Vagina (tissue), 2 donors: ENCODE measurements at regions of chr9 and their contacts with region 1.

Region 1: DNA sequence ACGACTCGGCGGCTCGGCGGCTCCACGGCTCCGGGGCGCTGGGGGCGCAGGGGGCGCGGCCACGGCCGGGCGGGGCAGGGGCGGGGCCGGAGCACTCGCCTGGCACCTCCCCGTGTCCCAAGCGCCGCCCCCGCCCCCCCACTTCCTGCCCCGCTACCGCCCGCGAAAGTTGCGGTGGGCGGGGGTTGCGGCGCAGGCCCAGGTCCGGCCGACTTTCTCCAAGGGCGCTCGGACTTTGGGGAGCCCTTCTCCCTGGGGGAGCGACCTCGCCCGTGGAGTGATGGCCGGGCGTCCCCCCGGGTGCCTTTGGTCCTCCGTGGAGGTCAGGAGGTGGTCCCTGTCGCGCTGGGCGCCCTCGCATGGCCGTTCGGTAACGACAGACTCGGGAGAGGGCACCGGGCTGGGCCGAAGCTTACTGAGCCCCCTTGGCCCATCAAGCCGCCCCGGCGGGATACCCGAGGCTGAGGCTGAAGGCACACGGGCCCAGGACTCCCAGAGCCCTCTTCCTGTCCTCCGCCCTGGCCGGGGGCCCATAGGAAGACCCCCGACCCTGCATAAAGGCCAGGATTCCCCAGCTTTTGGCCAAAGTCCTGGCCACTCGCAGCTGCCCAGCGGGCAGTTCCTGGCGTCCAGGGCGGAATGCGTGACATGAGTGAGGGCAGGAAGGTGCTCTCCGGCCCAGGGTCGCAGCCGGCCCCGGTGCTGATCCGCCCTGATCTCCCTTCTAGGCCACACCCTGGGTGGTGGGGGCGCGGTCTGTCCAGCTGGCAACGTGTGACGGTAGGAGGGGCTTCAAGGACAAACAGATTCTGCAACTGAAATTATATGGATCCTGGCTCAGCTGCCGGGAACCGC is 883 bp upstream of the VAV2 start:
- DNase-seq: peak in 1 of 2 donors; percentile 97
- H3K4me3 ChIP-seq: peak overlapping the region; percentile 60 to 81
- H3K27ac ChIP-seq: peak overlapping the region; percentile 88
- H3K4me1 ChIP-seq: peaks cover 25% of the 10 kb centered on the region
- H3K27me3 ChIP-seq: no peaks in the 10 kb centered on the region
- CTCF ChIP-seq: peak in 2 of 3 experiments; percentile 1 to 14
- POLR2A ChIP-seq: peak in 1 of 2 donors; percentile 79

Region 2: DNA sequence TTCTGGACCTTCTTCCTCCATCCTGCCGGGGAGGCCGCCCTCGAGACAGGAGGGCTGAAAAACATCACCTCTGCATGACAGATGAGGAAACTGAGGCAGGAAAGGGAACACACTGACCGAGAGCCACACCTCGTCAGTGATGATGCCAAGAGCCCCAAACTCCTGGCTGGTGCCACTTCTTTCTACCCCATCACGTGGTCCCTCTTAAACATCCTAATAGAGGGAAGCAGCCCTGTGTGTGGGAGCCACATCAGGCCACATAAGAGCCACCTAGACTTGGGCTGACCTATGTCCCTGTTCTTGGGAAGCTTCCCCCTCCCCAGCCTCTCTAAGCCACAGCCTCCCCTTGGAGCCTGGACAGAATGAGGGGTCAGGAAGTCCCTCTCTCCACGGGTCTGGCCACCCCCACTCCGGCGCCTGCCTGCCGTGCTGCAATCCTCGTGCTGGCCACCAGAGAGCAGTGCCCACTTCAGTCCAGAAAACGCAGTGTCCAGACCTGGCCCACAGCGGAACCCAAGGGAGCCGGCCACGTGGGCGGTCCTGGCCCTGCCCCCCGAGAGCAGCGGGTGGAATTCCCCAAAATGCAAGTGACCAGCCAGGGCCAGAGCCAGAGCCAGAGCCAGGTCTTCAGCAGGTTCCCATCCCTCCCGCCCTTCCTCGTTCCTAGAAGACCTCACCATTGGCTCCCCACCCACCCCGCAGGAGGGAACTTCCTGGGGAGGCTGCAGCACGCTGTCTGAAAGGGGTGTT is 200.1 kb before region 1 on chr9:
- intact Hi-C with region 1: loop called (anchors 2 kb)
- DNase-seq: no peak
- H3K4me3 ChIP-seq: no peak overlapping the region
- H3K27ac ChIP-seq: no peak overlapping the region
- H3K4me1 ChIP-seq: peaks cover 9% of the 10 kb centered on the region
- H3K27me3 ChIP-seq: no peaks in the 10 kb centered on the region
- CTCF ChIP-seq: peak; percentile 86 to 97 (median 94)
- POLR2A ChIP-seq: no peak